ENCODE measurements at regions of chr18 and their contacts with region 1.

Region 1: GRCh38 chr18:623761-624620 is 27.2 kb downstream of the CLUL1 start:
- DNase-seq: peak; percentile 85
- ATAC-seq: peak; percentile 99
- H3K4me3 ChIP-seq: no peak overlapping the region
- H3K27ac ChIP-seq: no peak overlapping the region
- H3K4me1 ChIP-seq: no peaks in the 10 kb centered on the region
- H3K27me3 ChIP-seq: peaks cover 23% of the 10 kb centered on the region; the same call in 1 of the 2 replicates
- CTCF ChIP-seq: peak; percentile 62

Region 2: GRCh38 chr18:267688-268552 is 356.1 kb before region 1 on chr18 and contains the start of gene THOC1:
- CTCF ChIA-PET with region 1: no interaction called
- POLR2A ChIA-PET with region 1: interaction called, 13 read pairs
- intact Hi-C with region 1: no loop called
- DNase-seq: peak; percentile 94
- ATAC-seq: peak; percentile 93
- H3K4me3 ChIP-seq: peak within 1 kb of the TSS; percentile 92
- H3K27ac ChIP-seq: peak within 1 kb of the TSS; percentile 78
- H3K4me1 ChIP-seq: peaks cover 12% of the 10 kb centered on the region
- H3K27me3 ChIP-seq: no peaks in the 10 kb centered on the region
- CTCF ChIP-seq: no peak
- total RNA-seq, gene THOC1: 29.4 and 43.5 TPM in 2 replicates

Region 3: GRCh38 chr18:527146-527545 is 96.8 kb before region 1 on chr18:
- CTCF ChIA-PET with region 1: no interaction called
- POLR2A ChIA-PET with region 1: no interaction called
- intact Hi-C with region 1: no loop called
- DNase-seq: no peak
- ATAC-seq: no peak
- H3K4me3 ChIP-seq: no peak overlapping the region
- H3K27ac ChIP-seq: no peak overlapping the region
- H3K4me1 ChIP-seq: peaks cover 12% of the 10 kb centered on the region; the same call in 1 of the 2 replicates
- H3K27me3 ChIP-seq: peaks cover 13% of the 10 kb centered on the region; the same call in 1 of the 2 replicates
- CTCF ChIP-seq: no peak

Region 4: GRCh38 chr18:589228-589627 is 34.8 kb before region 1 on chr18:
- CTCF ChIA-PET with region 1: no interaction called
- POLR2A ChIA-PET with region 1: no interaction called
- intact Hi-C with region 1: no loop called
- DNase-seq: no peak
- ATAC-seq: no peak
- H3K4me3 ChIP-seq: no peak overlapping the region
- H3K27ac ChIP-seq: no peak overlapping the region
- H3K4me1 ChIP-seq: no peaks in the 10 kb centered on the region
- H3K27me3 ChIP-seq: peaks cover 55% of the 10 kb centered on the region
- CTCF ChIP-seq: no peak

Region 5: DNA sequence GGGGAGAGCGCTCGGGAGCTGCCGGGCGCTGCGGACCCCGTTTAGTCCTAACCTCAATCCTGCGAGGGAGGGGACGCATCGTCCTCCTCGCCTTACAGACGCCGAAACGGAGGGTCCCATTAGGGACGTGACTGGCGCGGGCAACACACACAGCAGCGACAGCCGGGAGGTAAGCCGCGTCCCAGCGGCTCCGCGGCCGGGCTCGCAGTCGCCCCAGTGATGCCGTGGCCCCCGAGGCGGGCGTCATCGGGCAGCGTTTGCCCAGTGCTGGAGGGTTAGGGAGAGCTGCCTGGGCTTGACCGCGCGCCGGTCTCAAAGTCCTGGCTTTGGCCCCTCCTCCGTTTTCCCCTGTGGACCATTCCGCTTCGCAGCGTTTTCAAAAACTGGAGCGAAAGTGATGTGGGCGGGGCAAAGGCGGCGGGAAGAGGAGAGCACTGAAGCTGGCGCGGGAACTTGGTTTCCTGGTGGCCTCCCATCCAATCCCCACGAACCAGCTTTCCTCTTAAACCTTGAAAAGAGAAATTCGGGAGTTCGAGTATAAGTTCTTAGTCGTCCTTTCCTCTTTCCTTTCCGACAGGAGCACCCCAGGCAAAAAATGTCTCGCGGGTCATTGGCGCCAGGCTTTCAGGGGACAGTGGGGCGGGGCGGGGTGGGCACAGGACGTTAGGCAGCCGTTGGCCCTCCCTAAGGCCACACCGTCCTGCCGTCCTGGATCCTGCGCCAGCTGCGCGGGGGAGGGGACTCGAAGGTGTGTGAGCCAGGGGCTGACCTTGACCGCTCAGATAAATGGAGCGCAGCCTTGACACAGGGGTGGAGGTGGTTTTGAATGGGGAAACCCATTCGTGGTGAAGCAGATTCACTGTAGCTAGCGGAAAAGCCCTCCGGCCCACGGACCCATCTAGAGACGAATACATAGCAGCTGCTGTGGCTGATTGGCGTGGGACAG is 34.3 kb after region 1 on chr18:
- CTCF ChIA-PET with region 1: interaction called, 12 read pairs
- POLR2A ChIA-PET with region 1: interaction called, 4 read pairs
- intact Hi-C with region 1: loop called (anchors 2 kb)
- DNase-seq: peak; percentile 96
- ATAC-seq: peak; percentile 84
- H3K4me3 ChIP-seq: peak overlapping the region; percentile 94
- H3K27ac ChIP-seq: peak overlapping the region; percentile 79
- H3K4me1 ChIP-seq: peaks cover 16% of the 10 kb centered on the region
- H3K27me3 ChIP-seq: no peaks in the 10 kb centered on the region
- CTCF ChIP-seq: no peak

Region 6: DNA sequence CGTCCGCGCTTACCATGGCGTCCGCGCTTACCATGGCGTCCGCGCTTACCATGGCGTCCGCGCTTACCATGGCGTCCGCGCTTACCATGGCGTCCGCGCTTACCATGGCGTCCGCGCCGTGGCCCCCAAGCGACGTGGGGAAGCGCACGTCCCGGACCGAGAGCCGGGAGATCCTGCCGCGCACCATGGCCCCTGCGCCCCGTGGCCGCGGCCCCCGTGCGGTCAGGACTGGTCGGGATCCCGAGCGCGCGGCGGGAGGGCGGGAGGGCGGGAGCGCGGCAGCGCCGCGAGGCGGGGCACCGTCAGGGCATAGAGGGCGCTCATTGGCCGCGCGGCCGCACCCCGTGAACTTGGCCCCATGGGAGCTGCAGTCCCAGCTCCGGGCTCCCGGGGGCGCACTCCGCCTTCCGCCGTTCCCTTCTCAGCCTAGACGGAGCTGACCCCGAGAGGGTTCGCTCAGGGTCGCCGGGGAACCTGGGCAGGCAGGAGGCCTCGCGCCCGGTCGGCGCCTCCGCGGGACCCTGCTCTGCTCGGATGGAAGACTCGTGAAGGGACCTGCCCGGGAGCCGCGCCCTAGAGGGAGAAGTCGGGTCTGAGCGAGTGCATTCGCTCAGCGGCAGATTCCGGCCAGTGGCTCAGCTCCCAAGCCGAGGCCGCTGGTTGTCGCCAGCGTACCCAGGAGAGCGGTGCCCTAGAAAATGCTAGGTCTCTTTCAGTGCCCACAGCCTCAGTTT is 88.6 kb after region 1 on chr18 and contains the start of gene ENOSF1:
- CTCF ChIA-PET with region 1: interaction called, 6 read pairs
- POLR2A ChIA-PET with region 1: interaction called, 5 read pairs
- intact Hi-C with region 1: loop called (anchors 5 kb)
- DNase-seq: peak; percentile 84
- ATAC-seq: peak; percentile 84
- H3K4me3 ChIP-seq: peak within 1 kb of the TSS; percentile 80
- H3K27ac ChIP-seq: peak within 1 kb of the TSS; percentile 63
- H3K4me1 ChIP-seq: peaks cover 13% of the 10 kb centered on the region
- H3K27me3 ChIP-seq: no peaks in the 10 kb centered on the region
- CTCF ChIP-seq: peak; percentile 66
- total RNA-seq, gene ENOSF1: 44.2 and 61.0 TPM in 2 replicates

Region 7: DNA sequence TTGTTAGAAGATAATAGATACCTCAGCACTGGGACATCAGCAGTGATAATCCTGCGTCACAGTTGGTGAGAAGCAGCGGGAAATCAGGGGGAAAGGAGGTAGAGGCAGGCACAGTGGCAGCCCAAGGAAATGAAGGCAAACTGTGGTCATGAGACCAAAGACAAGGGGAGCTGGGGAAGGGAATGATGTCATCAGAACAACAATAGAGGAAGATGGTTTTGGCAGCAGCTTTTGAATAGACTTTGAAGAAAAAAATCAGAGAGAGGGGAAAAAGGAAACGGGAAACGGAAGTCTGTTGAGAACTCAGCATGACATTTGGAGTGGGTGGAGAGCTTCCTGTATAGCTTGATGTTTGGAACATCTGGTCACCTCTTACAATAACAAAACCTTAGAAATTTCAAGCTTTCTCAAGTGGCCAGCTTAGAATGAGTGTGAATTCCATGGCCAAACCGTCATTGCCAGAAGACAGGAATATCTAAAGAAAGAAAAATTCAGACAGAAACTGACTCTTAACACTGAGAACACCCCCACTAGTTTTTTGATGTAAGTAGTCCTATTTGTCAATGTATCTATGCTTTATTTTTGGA is 206.4 kb after region 1 on chr18:
- CTCF ChIA-PET with region 1: interaction called, 25 read pairs
- POLR2A ChIA-PET with region 1: interaction called, 4 read pairs
- intact Hi-C with region 1: loop called (anchors 1 kb)
- DNase-seq: no peak
- ATAC-seq: peak; percentile 21; the same call in 1 of the 2 replicates
- H3K4me3 ChIP-seq: no peak overlapping the region
- H3K27ac ChIP-seq: no peak overlapping the region
- H3K4me1 ChIP-seq: peaks cover 6% of the 10 kb centered on the region; the same call in 1 of the 2 replicates
- H3K27me3 ChIP-seq: no peaks in the 10 kb centered on the region
- CTCF ChIP-seq: no peak